Calu3 (cell line): ENCODE measurements at regions of chr11 and their contacts with region 1.

Region 1: DNA sequence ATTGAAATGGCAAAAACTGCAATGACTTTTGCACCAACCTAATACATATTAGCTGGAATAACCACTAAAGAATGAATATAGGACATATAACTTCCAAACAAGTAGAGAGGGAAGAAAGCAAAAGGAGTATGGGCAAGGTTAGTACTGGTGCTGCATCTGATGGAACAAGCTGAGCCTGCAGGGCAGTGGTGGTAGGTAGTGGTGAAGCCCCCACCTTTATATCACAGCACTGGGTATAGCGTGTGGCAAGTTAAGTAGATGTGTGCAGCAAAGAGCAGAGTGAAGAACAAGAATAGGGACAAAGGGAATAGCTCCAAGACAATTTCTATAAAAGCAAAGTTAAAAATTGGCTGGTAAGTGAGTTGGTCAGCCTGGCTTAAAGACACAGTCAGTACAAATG is 62.3 kb downstream of the CTNND1 start:
- DNase-seq: no peak
- H3K4me3 Mint-ChIP-seq: no peak overlapping the region
- H3K27ac Mint-ChIP-seq: peak overlapping the region; percentile 20
- H3K4me1 Mint-ChIP-seq: no peaks in the 10 kb centered on the region
- H3K27me3 Mint-ChIP-seq: no peaks in the 10 kb centered on the region
- CTCF ChIP-seq: no peak

Region 2: GRCh38 chr11:58286249-58286648 is 462.4 kb after region 1 on chr11:
- CTCF ChIA-PET with region 1: interaction called, 5 read pairs
- intact Hi-C with region 1: loop called (anchors 5 kb)
- DNase-seq: peak; percentile 38
- H3K4me3 Mint-ChIP-seq: no peak overlapping the region
- H3K27ac Mint-ChIP-seq: no peak overlapping the region
- H3K4me1 Mint-ChIP-seq: peaks cover 15% of the 10 kb centered on the region
- H3K27me3 Mint-ChIP-seq: no peaks in the 10 kb centered on the region
- CTCF ChIP-seq: peak; percentile 31